Activated B cell treated with CpG ODN at 0.5 μM for 24 hours (primary cell): ENCODE measurements at regions of chr20 and their contacts with region 1.

Region 1: GRCh38 chr20:57351042-57351783 is at the start of gene RAE1:
- DNase-seq: peak; percentile 82
- ATAC-seq: peak; percentile 86
- H3K4me3 Mint-ChIP-seq: peak within 1 kb of the TSS; percentile 90
- H3K27ac Mint-ChIP-seq: peak within 1 kb of the TSS; percentile 79
- H3K4me1 Mint-ChIP-seq: peaks cover 17% of the 10 kb centered on the region
- H3K27me3 Mint-ChIP-seq: peaks cover 3% of the 10 kb centered on the region
- CTCF ChIP-seq: no peak
- total RNA-seq, gene RAE1: 35.7 and 36.6 TPM in 2 replicates

Region 2: DNA sequence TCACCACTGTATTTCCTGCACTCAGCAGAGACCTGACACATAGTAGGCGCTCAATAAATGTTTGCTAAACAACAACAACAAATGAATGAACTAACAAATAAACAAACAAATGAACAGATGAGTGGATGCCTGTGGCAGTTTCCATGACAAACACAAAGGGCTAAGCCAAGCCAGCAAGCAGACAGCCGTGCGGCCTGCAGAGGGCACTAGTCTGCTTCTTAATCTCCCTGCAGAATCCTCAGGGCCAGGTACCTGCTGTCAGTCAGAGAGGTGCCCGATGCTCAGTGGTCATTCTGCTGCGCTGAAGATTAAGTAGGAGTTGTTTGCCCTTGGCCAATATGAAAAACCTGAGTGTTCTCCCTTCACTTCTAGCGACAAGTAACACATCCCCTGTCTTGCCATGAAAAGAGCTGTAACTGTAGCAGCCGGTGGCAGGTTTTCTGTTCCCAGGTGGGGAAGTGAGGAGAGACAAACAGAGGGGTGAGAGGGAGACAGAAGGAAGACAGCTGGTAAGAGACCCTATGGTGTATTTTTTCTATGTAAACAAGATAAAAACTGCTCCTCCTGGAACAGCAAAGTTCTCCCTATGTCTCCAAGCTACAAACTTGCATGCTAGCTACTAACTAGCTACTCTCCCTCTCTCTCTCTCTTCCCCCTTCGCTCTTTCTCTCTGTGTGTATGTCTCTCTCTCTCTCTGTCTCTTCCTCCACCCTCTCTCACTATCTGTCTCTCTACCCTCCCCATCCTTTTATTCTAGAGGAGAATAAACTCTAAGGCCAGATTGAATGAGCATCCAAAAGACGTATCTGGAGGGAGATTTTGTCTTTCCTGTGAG is 1103.0 kb before region 1 on chr20 and contains the start of gene MC3R:
- CTCF ChIA-PET with region 1: no interaction called
- POLR2A ChIA-PET with region 1: no interaction called
- intact Hi-C with region 1: loop called (anchors 5 kb)
- DNase-seq: no peak
- ATAC-seq: no peak
- H3K4me3 Mint-ChIP-seq: no peak within 1 kb of the TSS
- H3K27ac Mint-ChIP-seq: no peak within 1 kb of the TSS
- H3K4me1 Mint-ChIP-seq: no peaks in the 10 kb centered on the region
- H3K27me3 Mint-ChIP-seq: peaks cover 32% of the 10 kb centered on the region
- CTCF ChIP-seq: no peak
- total RNA-seq, gene MC3R: not detected in 2 replicates

Region 3: GRCh38 chr20:56400090-56400542 is 951.1 kb before region 1 on chr20:
- CTCF ChIA-PET with region 1: no interaction called
- POLR2A ChIA-PET with region 1: no interaction called
- intact Hi-C with region 1: loop called (anchors 1 kb)
- DNase-seq: no peak
- ATAC-seq: peak; percentile 65
- H3K4me3 Mint-ChIP-seq: no peak overlapping the region
- H3K27ac Mint-ChIP-seq: no peak overlapping the region
- H3K4me1 Mint-ChIP-seq: peaks cover 15% of the 10 kb centered on the region
- H3K27me3 Mint-ChIP-seq: no peaks in the 10 kb centered on the region
- CTCF ChIP-seq: peak; percentile 47

Region 4: DNA sequence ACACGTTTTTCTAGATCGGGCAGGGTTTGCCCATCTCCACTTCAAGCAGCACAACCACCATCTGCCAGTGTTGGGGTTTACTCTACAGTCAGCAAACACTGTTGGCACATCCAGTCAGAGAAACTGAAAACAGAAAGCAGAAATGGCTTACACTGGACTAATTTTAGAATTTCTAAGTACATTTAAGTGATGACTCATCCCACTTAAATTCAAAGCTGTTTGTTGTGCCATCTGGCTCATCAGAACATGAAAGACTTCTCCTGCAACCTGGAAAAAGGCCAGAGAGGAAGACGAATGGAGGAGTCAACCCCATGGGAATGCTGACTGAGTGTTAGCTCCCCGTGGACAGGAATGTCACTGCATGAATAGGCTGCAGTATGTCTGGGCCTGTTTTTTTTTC is 796.3 kb before region 1 on chr20:
- CTCF ChIA-PET with region 1: interaction called, 11 read pairs
- POLR2A ChIA-PET with region 1: no interaction called
- intact Hi-C with region 1: no loop called
- DNase-seq: no peak
- ATAC-seq: peak; percentile 40
- H3K4me3 Mint-ChIP-seq: no peak overlapping the region
- H3K27ac Mint-ChIP-seq: no peak overlapping the region
- H3K4me1 Mint-ChIP-seq: peaks cover 8% of the 10 kb centered on the region
- H3K27me3 Mint-ChIP-seq: peaks cover 2% of the 10 kb centered on the region
- CTCF ChIP-seq: no peak

Region 5: GRCh38 chr20:58209652-58210397 is 858.6 kb after region 1 on chr20:
- CTCF ChIA-PET with region 1: no interaction called
- POLR2A ChIA-PET with region 1: no interaction called
- intact Hi-C with region 1: loop called (anchors 10 kb)
- DNase-seq: peak; percentile 88
- ATAC-seq: peak; percentile 96
- H3K4me3 Mint-ChIP-seq: peak overlapping the region; percentile 30
- H3K27ac Mint-ChIP-seq: no peak overlapping the region
- H3K4me1 Mint-ChIP-seq: peaks cover 4% of the 10 kb centered on the region
- H3K27me3 Mint-ChIP-seq: peaks cover 3% of the 10 kb centered on the region
- CTCF ChIP-seq: peak; percentile 99